ENCODE measurements at regions of chr1 and their contacts with region 1.

Region 1: DNA sequence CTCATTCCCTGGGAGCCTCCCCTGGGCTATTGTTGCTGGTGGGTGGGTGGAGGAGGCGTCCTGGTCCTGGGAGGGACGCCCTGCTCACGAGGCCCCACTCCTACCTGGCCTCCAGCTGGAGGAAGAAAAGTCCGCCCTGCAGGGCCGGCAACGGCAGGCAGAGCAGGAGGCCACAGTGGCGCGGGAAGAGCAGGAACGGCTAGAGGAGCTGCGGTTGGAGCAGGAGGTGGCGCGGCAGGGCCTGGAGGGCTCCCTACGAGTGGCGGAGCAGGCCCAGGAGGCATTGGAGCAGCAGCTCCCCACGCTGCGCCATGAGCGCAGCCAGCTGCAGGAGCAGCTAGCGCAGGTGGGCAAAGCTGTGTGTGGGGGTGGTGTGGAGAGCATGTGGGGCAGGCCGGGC is 24.9 kb downstream of the CROCC start:
- DNase-seq: no peak

Region 2: DNA sequence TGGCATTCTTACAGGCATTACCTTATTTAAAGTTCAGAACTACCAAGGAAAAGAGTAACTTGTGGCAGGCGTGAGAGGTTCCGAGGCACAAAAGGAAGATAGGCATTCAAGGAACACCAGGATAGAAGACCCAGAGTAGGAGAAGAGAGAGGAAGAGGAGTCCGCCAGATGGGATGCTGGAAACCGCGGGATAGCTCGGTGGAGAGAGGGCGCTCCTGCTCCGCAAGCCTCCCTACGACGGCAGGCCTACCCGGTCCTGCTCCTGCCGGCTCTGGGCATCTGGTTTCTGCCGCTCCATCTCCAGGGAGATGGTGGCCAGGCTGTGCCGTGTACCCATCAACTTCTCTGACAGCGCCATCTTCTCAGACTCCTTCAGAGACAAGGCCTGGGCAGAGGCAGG is 327.9 kb before region 1 on chr1:
- intact Hi-C with region 1: loop called in 1 of 2 experiments (anchors 2 kb)
- DNase-seq: peak; percentile 89

Measured in posterior vena cava (tissue), 2 donors.